Heart right ventricle (tissue), 16 donors: ENCODE measurements at regions of chr12 and their contacts with region 1.

Region 1: GRCh38 chr12:92987362-92987761 is 58.3 kb upstream of the EEA1 start:
- DNase-seq: peak in 1 of 2 donors; percentile 34
- ATAC-seq: peak; percentile 39 to 90 (median 86)
- H3K4me3 ChIP-seq: no peak overlapping the region
- H3K27ac ChIP-seq: peak overlapping the region in 9 of 10 donors; percentile 30 to 77 (median 52)
- H3K4me1 ChIP-seq: peaks cover 0 to 21% (median 9%) of the 10 kb centered on the region in 9 donors
- H3K27me3 ChIP-seq: no peaks in the 10 kb centered on the region
- CTCF ChIP-seq: peak; percentile 39 to 77 (median 63)

Region 2: GRCh38 chr12:93025145-93025805 is 37.9 kb after region 1 on chr12:
- intact Hi-C with region 1: loop called in 1 of 10 experiments (anchors 5 kb)
- DNase-seq: peak in 1 of 2 donors; percentile 28
- ATAC-seq: peak in 4 of 8 donors; percentile 55 to 62 (median 59)
- H3K4me3 ChIP-seq: no peak overlapping the region
- H3K27ac ChIP-seq: peak overlapping the region in 2 of 10 donors; percentile 23 to 37
- H3K4me1 ChIP-seq: peaks cover 0 to 25% (median 6%) of the 10 kb centered on the region in 9 donors
- H3K27me3 ChIP-seq: no peaks in the 10 kb centered on the region
- CTCF ChIP-seq: peak in 8 of 9 donors; percentile 33 to 67 (median 61)

Region 3: GRCh38 chr12:93109551-93110203 is 122.3 kb after region 1 on chr12:
- intact Hi-C with region 1: loop called in 1 of 10 experiments (anchors 5 kb)
- DNase-seq: no peak
- ATAC-seq: peak in 4 of 8 donors; percentile 8 to 54 (median 16)
- H3K4me3 ChIP-seq: no peak overlapping the region
- H3K27ac ChIP-seq: peak overlapping the region in 4 of 10 donors; percentile 8 to 55 (median 36)
- H3K4me1 ChIP-seq: peaks cover 0 to 52% (median 31%) of the 10 kb centered on the region in 9 donors
- H3K27me3 ChIP-seq: no peaks in the 10 kb centered on the region
- CTCF ChIP-seq: no peak

Region 4: GRCh38 chr12:93387780-93388179 is 400.4 kb after region 1 on chr12:
- intact Hi-C with region 1: loop called in 2 of 10 experiments (anchors 10 kb)
- DNase-seq: no peak
- ATAC-seq: peak in 4 of 8 donors; percentile 30 to 58 (median 48)
- H3K4me3 ChIP-seq: no peak overlapping the region
- H3K27ac ChIP-seq: peak overlapping the region in 5 of 10 donors; percentile 6 to 50 (median 23)
- H3K4me1 ChIP-seq: peaks cover 3 to 92% (median 66%) of the 10 kb centered on the region in 9 donors
- H3K27me3 ChIP-seq: no peaks in the 10 kb centered on the region
- CTCF ChIP-seq: no peak

Region 5: DNA sequence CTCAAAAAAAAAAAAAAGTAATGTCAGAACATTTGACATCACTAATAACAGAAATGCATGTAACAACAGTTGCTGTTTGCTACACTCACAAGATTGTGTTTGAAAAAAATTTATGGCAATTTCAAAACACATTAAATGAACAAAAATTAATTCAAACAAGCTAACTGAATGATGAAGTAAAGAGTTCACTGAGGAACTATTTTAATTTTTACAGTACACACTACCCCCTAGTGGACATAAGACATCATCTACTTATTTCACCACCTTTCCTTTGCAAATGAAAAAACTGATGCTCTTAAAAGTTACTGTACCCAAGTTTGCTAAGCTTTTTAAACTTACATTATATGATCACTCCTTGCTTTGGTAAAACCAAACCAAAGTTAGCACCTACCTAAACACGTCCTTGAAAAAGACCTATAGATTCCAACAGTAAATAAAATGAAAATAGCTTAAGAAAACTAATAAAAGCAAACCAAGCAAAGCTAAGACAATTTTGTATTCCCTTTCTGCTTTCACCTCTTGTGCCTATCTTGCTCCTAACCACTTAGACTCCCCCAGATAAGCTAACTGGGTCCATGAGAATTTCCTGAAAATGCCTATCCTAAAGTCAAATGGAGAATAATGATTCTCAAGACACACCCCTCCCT is 432.1 kb after region 1 on chr12:
- intact Hi-C with region 1: loop called in 7 of 10 experiments (anchors 1 to 10 kb)
- DNase-seq: no peak
- ATAC-seq: peak in 7 of 8 donors; percentile 51 to 75 (median 56)
- H3K4me3 ChIP-seq: peak overlapping the region in 1 of 10 donors; percentile 4
- H3K27ac ChIP-seq: peak overlapping the region in 2 of 10 donors; percentile 1 to 2
- H3K4me1 ChIP-seq: peaks cover 2 to 82% (median 67%) of the 10 kb centered on the region in 9 donors
- H3K27me3 ChIP-seq: no peaks in the 10 kb centered on the region
- CTCF ChIP-seq: peak; percentile 48 to 81 (median 72)